ENCODE measurements at regions of chr12 and their contacts with region 1.

Region 1: GRCh38 chr12:116277393-116278278 is at the start of gene MED13L:
- ATAC-seq: peak; percentile 86 to 95 (median 93)
- H3K4me3 ChIP-seq: peak within 1 kb of the TSS; percentile 94 to 100 (median 98)
- H3K27ac ChIP-seq: peak within 1 kb of the TSS; percentile 97 to 98
- H3K4me1 ChIP-seq: peaks cover 2 to 16% of the 10 kb centered on the region in 2 donors
- total RNA-seq, gene MED13L: 40.5 to 90.5 (median 66.7) TPM

Region 2: GRCh38 chr12:116599285-116600136 is 321.9 kb after region 1 on chr12:
- in situ Hi-C with region 1: loop called in 1 of 9 experiments (anchors 25 kb)
- ATAC-seq: peak; percentile 85 to 95 (median 90)
- H3K4me3 ChIP-seq: peak overlapping the region in 4 of 5 donors; percentile 6 to 29 (median 10)
- H3K27ac ChIP-seq: peak overlapping the region; percentile 1 to 40
- H3K4me1 ChIP-seq: peaks cover 20 to 25% of the 10 kb centered on the region in 2 donors